Activated CD4-positive, alpha-beta T cell treated with anti-CD3 and anti-CD28 coated beads for 36 hours (primary cell): ENCODE measurements at regions of chr18 and their contacts with region 1.

Region 1: DNA sequence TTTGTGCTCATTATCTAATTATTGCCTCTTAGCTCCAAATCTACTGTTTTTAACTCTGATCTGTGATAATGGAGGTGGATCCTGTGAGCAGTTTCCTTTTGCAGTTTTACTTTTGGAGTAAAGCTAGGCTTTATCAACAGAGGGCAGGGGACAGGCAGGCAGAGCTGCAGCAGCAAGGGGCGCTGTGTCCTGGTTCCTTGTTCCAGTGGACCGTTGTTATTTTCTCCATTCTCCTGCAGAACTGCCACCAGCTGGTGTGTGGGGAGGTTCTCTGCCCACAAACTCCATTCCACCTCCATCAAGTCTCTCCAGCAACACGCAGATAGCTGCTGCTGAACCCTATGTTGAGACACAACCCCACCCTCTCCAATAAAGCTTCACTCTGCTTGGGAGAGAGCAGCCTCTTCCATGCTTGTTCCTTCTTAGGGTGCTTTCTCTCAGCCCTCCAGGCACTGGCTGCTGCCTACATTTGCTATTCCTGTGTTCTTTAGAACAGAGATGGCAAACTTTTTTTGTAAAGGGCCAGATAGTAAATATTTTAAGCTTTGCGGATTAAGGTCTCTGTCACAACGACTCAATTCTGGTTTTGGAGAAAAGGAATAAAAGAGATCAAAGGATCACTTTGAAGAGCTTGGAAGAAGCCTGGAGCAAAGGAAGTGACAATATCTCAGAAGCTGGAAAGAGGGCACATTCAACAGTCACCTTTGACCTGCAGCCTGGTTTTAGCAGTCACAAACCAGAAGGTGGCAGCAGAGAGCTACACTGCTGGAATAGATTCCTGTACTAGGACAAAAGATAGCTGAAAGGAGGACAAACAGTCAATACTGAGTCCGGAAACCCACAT is 208.8 kb downstream of the CCDC178 start:
- DNase-seq: peak; percentile 80
- ATAC-seq: peak; percentile 80
- H3K4me3 Mint-ChIP-seq: no peak overlapping the region
- H3K27ac Mint-ChIP-seq: no peak overlapping the region
- H3K4me1 Mint-ChIP-seq: peaks cover 5% of the 10 kb centered on the region
- H3K27me3 Mint-ChIP-seq: no peaks in the 10 kb centered on the region

Region 2: GRCh38 chr18:33146014-33146413 is 85.7 kb before region 1 on chr18:
- CTCF ChIA-PET with region 1: no interaction called
- POLR2A ChIA-PET with region 1: no interaction called
- intact Hi-C with region 1: no loop called
- DNase-seq: no peak
- ATAC-seq: no peak
- H3K4me3 Mint-ChIP-seq: no peak overlapping the region
- H3K27ac Mint-ChIP-seq: no peak overlapping the region
- H3K4me1 Mint-ChIP-seq: no peaks in the 10 kb centered on the region
- H3K27me3 Mint-ChIP-seq: no peaks in the 10 kb centered on the region

Region 3: DNA sequence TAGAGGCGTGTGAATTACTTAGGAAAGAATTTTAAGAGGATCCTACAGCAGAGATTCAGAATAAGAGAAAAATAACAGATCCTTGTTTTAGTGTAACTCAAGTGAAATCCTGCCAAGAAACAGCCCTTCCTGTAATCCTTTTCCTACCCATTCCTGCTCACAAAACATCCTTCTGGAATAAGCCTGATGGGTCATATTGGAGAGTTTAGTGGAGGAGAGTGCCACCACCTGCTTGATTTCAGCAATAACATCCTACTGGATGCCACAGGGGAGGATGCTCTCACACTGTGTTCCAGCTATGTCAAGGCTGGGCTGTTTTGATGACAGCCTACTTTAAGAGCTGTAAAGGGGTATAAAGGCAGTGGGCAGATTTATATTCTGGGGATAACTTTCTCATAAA is 263.6 kb after region 1 on chr18:
- CTCF ChIA-PET with region 1: no interaction called
- POLR2A ChIA-PET with region 1: no interaction called
- intact Hi-C with region 1: loop called in 1 of 2 experiments (anchors 5 kb)
- DNase-seq: no peak
- ATAC-seq: no peak
- H3K4me3 Mint-ChIP-seq: no peak overlapping the region
- H3K27ac Mint-ChIP-seq: no peak overlapping the region
- H3K4me1 Mint-ChIP-seq: no peaks in the 10 kb centered on the region
- H3K27me3 Mint-ChIP-seq: no peaks in the 10 kb centered on the region

Region 4: GRCh38 chr18:33761363-33761762 is 529.7 kb after region 1 on chr18:
- CTCF ChIA-PET with region 1: interaction called, 4 read pairs
- POLR2A ChIA-PET with region 1: no interaction called
- intact Hi-C with region 1: loop called in 1 of 2 experiments (anchors 1 kb)
- DNase-seq: no peak
- ATAC-seq: no peak
- H3K4me3 Mint-ChIP-seq: no peak overlapping the region
- H3K27ac Mint-ChIP-seq: no peak overlapping the region
- H3K4me1 Mint-ChIP-seq: no peaks in the 10 kb centered on the region
- H3K27me3 Mint-ChIP-seq: no peaks in the 10 kb centered on the region

Region 5: DNA sequence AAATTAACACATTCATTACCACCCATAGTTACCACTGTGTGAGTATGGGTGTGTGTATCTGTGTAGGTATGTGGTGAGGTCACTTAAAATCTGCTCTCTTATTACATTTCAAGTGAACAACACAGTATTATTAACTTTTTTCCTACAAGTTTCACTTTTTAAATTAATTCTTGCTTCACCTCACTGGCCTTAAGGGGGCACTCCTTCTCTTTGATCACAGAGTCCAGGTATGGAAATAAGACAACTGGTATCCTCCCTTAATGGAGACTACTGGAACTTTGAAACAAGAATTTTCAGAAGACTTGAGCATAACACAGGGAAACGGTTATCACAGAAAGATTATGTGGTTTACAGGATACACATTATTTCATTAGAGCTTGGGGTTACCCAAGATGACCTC is 602.2 kb after region 1 on chr18:
- CTCF ChIA-PET with region 1: no interaction called
- POLR2A ChIA-PET with region 1: no interaction called
- intact Hi-C with region 1: no loop called
- DNase-seq: no peak
- ATAC-seq: no peak
- H3K4me3 Mint-ChIP-seq: no peak overlapping the region
- H3K27ac Mint-ChIP-seq: no peak overlapping the region
- H3K4me1 Mint-ChIP-seq: no peaks in the 10 kb centered on the region
- H3K27me3 Mint-ChIP-seq: no peaks in the 10 kb centered on the region

Region 6: GRCh38 chr18:34322365-34323289 is 1090.9 kb after region 1 on chr18:
- CTCF ChIA-PET with region 1: no interaction called
- POLR2A ChIA-PET with region 1: no interaction called
- intact Hi-C with region 1: loop called in 1 of 2 experiments (anchors 5 kb)
- DNase-seq: peak; percentile 42
- ATAC-seq: no peak
- H3K4me3 Mint-ChIP-seq: no peak overlapping the region
- H3K27ac Mint-ChIP-seq: no peak overlapping the region
- H3K4me1 Mint-ChIP-seq: no peaks in the 10 kb centered on the region
- H3K27me3 Mint-ChIP-seq: no peaks in the 10 kb centered on the region